ENCODE measurements at regions of chr9 and their contacts with region 1.

Region 1: GRCh38 chr9:130770679-130771442 is 64.2 kb upstream of the ABL1 start:
- DNase-seq: no peak
- ATAC-seq: peak; percentile 66
- H3K4me3 Mint-ChIP-seq: no peak overlapping the region
- H3K27ac Mint-ChIP-seq: no peak overlapping the region
- H3K4me1 Mint-ChIP-seq: peaks cover 34% of the 10 kb centered on the region
- H3K27me3 Mint-ChIP-seq: no peaks in the 10 kb centered on the region
- CTCF ChIP-seq: no peak

Region 2: GRCh38 chr9:130820135-130820738 is 49.4 kb after region 1 on chr9:
- CTCF ChIA-PET with region 1: no interaction called
- POLR2A ChIA-PET with region 1: no interaction called
- intact Hi-C with region 1: no loop called
- DNase-seq: no peak
- ATAC-seq: no peak
- H3K4me3 Mint-ChIP-seq: no peak overlapping the region
- H3K27ac Mint-ChIP-seq: no peak overlapping the region
- H3K4me1 Mint-ChIP-seq: peaks cover 2% of the 10 kb centered on the region
- H3K27me3 Mint-ChIP-seq: no peaks in the 10 kb centered on the region
- CTCF ChIP-seq: no peak

Region 3: GRCh38 chr9:130834371-130835311 is 63.8 kb after region 1 on chr9 and contains the start of gene ABL1:
- CTCF ChIA-PET with region 1: interaction called, 3 read pairs
- POLR2A ChIA-PET with region 1: no interaction called
- intact Hi-C with region 1: loop called (anchors 1 kb)
- DNase-seq: peak; percentile 55
- ATAC-seq: peak; percentile 83
- H3K4me3 Mint-ChIP-seq: peak within 1 kb of the TSS; percentile 94
- H3K27ac Mint-ChIP-seq: peak within 1 kb of the TSS; percentile 89
- H3K4me1 Mint-ChIP-seq: peaks cover 40% of the 10 kb centered on the region
- H3K27me3 Mint-ChIP-seq: no peaks in the 10 kb centered on the region
- CTCF ChIP-seq: no peak
- total RNA-seq, gene ABL1: 32.8 and 41.6 TPM in 2 replicates

Region 4: DNA sequence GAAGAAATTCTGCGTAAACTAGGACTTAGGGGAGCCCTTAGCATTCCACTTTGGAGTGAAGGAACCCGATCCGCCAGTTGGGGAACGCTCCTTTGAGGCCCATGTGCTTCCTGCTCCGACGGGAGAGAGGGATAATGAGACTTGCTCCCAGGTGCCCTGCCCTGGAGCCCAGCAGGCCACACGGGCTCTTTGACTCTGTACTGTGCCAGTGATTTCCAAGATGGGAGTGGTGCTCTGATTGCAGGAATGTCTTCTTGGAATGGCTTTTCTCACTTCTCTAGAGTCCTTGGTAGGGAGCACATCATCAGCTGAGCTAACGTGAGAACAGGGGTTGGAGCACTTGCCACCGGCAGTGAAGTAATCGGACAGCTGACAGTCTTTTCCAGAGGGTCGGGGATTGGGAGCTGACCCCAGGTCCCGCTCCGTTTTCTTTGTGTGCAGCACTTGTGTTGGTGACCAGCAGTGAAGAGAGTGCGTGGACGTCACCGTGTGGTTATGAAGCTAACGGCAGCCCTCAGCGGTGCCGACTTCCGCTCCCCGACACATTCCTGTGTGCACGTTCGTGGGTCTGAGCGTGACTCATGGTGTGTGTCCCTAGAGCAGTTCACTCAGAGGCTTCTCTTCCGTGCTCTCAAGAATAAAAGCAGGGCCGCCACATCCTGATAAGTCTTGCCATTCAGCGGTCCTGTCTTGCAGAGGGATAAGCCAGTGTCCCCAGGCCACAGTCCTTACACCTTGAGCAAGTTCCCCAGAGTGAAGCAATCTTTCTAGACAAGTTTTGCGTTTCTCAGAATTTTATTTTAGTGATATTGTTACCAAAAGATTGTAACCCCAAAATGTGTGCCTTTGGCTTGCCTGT is 89.8 kb after region 1 on chr9:
- CTCF ChIA-PET with region 1: interaction called, 17 read pairs
- POLR2A ChIA-PET with region 1: no interaction called
- intact Hi-C with region 1: loop called (anchors 1 kb)
- DNase-seq: no peak
- ATAC-seq: no peak
- H3K4me3 Mint-ChIP-seq: no peak overlapping the region
- H3K27ac Mint-ChIP-seq: no peak overlapping the region
- H3K4me1 Mint-ChIP-seq: no peaks in the 10 kb centered on the region
- H3K27me3 Mint-ChIP-seq: no peaks in the 10 kb centered on the region
- CTCF ChIP-seq: no peak

Region 5: GRCh38 chr9:130866474-130866965 is 95.7 kb after region 1 on chr9:
- CTCF ChIA-PET with region 1: interaction called, 17 read pairs
- POLR2A ChIA-PET with region 1: no interaction called
- intact Hi-C with region 1: loop called (anchors 1 kb)
- DNase-seq: peak; percentile 33
- ATAC-seq: peak; percentile 56
- H3K4me3 Mint-ChIP-seq: no peak overlapping the region
- H3K27ac Mint-ChIP-seq: no peak overlapping the region
- H3K4me1 Mint-ChIP-seq: peaks cover 18% of the 10 kb centered on the region
- H3K27me3 Mint-ChIP-seq: no peaks in the 10 kb centered on the region
- CTCF ChIP-seq: no peak

Region 6: GRCh38 chr9:130940693-130941576 is 170.1 kb after region 1 on chr9:
- CTCF ChIA-PET with region 1: no interaction called
- POLR2A ChIA-PET with region 1: no interaction called
- intact Hi-C with region 1: loop called (anchors 1 kb)
- DNase-seq: peak; percentile 74
- ATAC-seq: peak; percentile 89
- H3K4me3 Mint-ChIP-seq: peak overlapping the region; percentile 53
- H3K27ac Mint-ChIP-seq: no peak overlapping the region
- H3K4me1 Mint-ChIP-seq: peaks cover 16% of the 10 kb centered on the region
- H3K27me3 Mint-ChIP-seq: peaks cover 44% of the 10 kb centered on the region
- CTCF ChIP-seq: peak; percentile 48

Measured in activated B cell treated with CpG ODN at 0.5 μM for 24 hours (primary cell).